CD4-positive, alpha-beta memory T cell (primary cell): ENCODE measurements at regions of chr18 and their contacts with region 1.

Region 1: DNA sequence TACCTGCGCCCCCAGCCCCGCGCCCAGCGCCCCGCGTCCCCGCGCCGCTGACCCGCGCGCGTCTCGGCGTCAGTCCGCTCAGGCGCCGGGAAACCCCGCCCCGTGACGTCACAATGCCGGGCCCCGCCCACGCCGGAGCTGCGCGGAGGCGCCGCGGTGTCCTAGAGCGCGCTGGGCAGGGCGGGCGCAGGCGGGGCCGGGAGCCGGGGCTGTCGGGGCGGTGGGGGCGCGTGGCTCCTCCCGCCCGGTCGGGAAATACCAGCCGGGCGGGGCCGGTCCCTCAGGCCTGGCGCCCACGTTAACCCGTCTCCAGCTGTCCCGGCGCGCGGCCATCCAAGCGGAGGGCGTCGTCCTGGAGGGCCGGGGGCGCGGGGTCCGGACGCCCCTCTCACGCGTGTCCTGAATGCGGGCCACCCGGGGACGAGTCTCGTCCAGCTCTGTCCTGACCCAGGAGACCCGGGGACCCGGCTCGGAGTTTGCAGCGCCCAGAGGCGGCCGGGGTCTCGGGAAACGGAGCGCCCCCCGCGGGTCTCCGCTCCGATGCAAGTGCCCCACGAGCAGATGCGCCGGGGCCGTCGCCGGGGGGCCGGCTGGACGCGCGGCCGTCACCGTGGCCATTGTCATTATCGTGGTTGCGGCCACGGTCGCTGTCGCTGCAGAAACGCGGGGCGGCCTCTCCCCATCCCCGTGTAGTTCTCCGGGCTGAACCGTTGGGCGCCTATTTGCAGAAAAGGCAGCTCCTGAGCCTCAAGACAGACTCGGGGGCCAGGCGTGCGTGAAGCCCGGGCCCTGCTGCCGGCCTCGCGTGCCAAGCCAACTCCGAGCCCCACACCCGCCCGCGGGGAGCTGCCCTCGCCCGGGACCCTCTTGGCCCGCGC is at the start of gene SLC66A2:
- DNase-seq: peak; percentile 88 to 91 (median 88)
- H3K4me3 ChIP-seq: peak within 1 kb of the TSS; percentile 36 to 69
- H3K4me3 Mint-ChIP-seq: peak within 1 kb of the TSS; percentile 86 to 94 (median 88)
- H3K27ac ChIP-seq: peak within 1 kb of the TSS; percentile 64
- H3K27ac Mint-ChIP-seq: peak within 1 kb of the TSS; percentile 71 to 92 (median 87)
- H3K4me1 ChIP-seq: peaks cover 29% of the 10 kb centered on the region
- H3K4me1 Mint-ChIP-seq: peaks cover 8 to 38% (median 21%) of the 10 kb centered on the region in 4 donors
- H3K27me3 ChIP-seq: no peaks in the 10 kb centered on the region
- H3K27me3 Mint-ChIP-seq: no peaks in the 10 kb centered on the region
- total RNA-seq, gene SLC66A2: 26.0 to 26.4 TPM

Region 2: GRCh38 chr18:79912409-79912991 is 39.3 kb before region 1 on chr18:
- CTCF ChIA-PET with region 1: no interaction called
- POLR2A ChIA-PET with region 1: no interaction called
- intact Hi-C with region 1: no loop called
- DNase-seq: no peak
- H3K4me3 ChIP-seq: no peak overlapping the region
- H3K4me3 Mint-ChIP-seq: peak overlapping the region in 1 of 8 donors; percentile 20
- H3K27ac ChIP-seq: no peak overlapping the region
- H3K27ac Mint-ChIP-seq: no peak overlapping the region
- H3K4me1 ChIP-seq: no peaks in the 10 kb centered on the region
- H3K4me1 Mint-ChIP-seq: peaks cover 0 to 9% (median 4%) of the 10 kb centered on the region in 4 donors
- H3K27me3 ChIP-seq: no peaks in the 10 kb centered on the region
- H3K27me3 Mint-ChIP-seq: no peaks in the 10 kb centered on the region

Region 3: DNA sequence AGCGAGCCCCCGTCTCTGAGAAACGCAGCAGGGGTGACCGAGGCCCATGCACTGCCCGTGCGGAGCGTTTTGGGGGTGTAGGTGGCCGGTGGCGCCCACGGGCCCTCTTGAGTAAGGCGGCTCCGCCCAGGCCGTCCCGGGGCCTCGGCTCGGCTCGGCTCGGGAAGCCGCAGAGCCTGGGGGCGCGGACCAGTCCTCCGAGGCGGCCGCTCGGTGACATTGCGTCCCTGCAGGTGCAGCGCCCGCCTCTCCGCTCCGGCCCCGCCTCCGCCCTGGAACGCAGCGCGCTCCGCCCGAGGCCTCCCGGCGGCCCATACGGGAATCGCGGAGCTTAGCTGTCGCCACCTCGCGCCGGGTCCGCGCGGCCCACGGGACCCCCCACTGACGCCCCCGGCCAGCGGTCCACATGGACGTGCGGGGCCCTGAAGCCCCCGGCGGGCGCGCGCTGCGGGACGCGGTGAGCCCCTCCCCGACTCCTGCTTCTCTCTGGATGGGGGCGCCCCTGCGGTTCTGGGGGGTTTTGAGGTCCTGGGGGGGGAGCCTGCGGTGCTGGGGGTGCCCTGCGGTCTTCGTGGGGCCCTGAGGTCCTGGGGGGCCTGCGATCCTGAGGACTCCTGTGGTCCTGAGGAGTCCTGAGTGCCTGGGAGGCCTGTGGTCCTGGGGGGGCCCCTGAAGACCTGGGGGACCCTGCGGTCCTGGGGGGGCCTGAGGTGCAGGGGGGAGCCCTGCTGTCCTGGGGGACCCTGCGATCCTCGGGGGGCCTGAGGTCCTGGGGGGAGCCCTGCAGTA is 12.7 kb after region 1 on chr18 and contains the start of gene HSBP1L1:
- CTCF ChIA-PET with region 1: interaction called, 3 read pairs
- POLR2A ChIA-PET with region 1: interaction called, 11 read pairs
- intact Hi-C with region 1: loop called (anchors 1 kb)
- DNase-seq: peak; percentile 61 to 73 (median 66)
- H3K4me3 ChIP-seq: peak within 1 kb of the TSS; percentile 52 to 62
- H3K4me3 Mint-ChIP-seq: peak within 1 kb of the TSS; percentile 82 to 92 (median 86)
- H3K27ac ChIP-seq: peak within 1 kb of the TSS; percentile 54
- H3K27ac Mint-ChIP-seq: peak within 1 kb of the TSS; percentile 85 to 94 (median 90)
- H3K4me1 ChIP-seq: peaks cover 38% of the 10 kb centered on the region
- H3K4me1 Mint-ChIP-seq: peaks cover 17 to 44% (median 29%) of the 10 kb centered on the region in 4 donors
- H3K27me3 ChIP-seq: no peaks in the 10 kb centered on the region
- H3K27me3 Mint-ChIP-seq: peaks cover 0 to 3% of the 10 kb centered on the region in 2 donors
- total RNA-seq, gene HSBP1L1: 30.7 to 34.8 TPM